Activated B cell treated with CpG ODN at 0.5 μM for 24 hours (primary cell): ENCODE measurements at regions of chr2 and their contacts with region 1.

Region 1: DNA sequence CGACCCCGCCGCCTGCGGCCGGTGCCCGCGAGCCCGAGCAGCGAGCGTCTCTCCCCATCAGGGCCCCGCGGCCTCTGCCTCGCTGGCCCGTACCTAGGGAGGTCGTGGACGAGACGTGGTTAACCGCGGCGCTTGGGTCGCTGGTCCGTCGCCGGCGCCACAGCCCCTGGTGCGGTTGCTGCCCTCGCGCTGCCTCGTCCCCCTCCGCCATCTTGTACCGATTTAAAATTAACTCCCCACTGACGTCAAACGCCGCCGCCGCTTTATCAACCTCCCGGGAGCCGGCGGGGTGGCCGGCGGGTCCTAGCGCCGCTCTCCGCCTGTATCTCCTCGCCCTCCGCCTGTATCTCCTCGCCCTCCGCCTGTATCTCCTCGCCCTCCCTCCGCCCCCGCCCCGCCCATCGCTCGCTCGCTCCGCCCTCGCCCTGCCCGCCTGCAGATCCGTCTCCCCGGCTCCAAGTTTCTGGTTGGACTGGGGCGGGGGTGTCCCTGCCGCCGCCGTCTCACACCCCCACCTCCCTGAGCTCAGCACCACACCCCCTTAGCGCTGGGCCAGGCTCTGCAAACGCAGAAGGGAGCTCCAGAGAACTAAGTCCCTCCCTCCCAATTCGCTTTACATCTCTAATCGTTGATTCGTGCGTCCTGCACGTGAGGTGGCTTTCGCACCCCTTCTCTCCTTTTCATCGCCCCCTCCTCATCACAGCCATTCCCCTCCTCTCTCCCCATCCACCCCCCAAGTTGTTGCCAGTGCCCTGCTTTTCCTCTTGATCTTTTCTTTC is at the start of gene ATL2:
- DNase-seq: peak; percentile 87
- ATAC-seq: peak; percentile 87
- H3K4me3 Mint-ChIP-seq: peak within 1 kb of the TSS; percentile 91
- H3K27ac Mint-ChIP-seq: peak within 1 kb of the TSS; percentile 86
- H3K4me1 Mint-ChIP-seq: peaks cover 43% of the 10 kb centered on the region
- H3K27me3 Mint-ChIP-seq: peaks cover 4% of the 10 kb centered on the region
- CTCF ChIP-seq: no peak
- total RNA-seq, gene ATL2: 40.0 and 43.2 TPM in 2 replicates

Region 2: DNA sequence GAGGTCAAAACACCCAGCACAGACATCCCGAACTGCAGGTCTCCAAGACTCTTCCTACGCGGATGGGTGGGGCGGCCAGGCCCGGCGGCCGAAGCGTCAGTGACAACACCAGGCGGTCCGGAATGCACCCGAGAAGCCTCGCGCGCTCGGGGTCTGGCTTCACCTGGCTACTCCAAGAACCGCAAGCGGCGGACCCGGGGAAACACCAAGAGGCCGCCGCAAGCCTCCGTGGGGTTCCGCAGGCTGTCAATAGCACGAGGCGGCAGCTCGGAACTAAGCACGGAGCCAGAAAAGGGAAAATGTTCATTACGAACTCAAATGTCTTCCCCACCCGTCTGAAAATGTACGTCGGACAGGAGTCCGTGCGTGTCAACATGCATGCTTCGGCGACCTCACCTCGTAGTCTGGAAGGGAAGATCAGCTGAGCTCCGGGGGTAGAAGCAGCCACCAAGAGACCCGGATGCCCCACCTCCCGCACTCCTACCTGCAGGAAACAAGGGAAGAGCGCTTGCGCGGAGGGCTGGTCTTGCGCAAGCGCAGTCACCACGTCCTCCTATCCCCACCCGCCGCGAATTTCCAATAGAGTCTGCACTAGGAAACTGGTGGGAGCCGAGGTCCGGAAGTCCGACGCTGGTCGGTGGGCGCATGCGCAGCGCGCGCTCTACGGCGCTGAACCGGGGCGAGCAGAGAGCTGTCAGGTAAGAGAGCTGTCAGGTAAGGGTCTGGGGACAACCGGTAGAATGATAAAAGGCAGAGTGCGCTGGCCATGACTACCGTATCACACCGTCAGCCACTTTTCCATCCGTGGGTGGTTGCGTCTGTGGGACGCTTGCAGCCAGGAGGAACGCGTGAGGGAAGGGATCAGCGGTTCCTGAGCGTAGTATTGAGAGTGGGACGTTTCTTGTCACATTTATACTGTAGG is 1293.1 kb before region 1 on chr2 and contains the starts of genes GPATCH11 and HEATR5B:
- CTCF ChIA-PET with region 1: no interaction called
- POLR2A ChIA-PET with region 1: no interaction called
- intact Hi-C with region 1: loop called (anchors 10 kb)
- DNase-seq: peak; percentile 83
- ATAC-seq: peak; percentile 83
- H3K4me3 Mint-ChIP-seq: no peak within 1 kb of the TSS
- H3K27ac Mint-ChIP-seq: no peak within 1 kb of the TSS
- H3K4me1 Mint-ChIP-seq: peaks cover 23% of the 10 kb centered on the region
- H3K27me3 Mint-ChIP-seq: no peaks in the 10 kb centered on the region
- CTCF ChIP-seq: no peak
- total RNA-seq, gene GPATCH11: 30.7 and 32.9 TPM in 2 replicates
- total RNA-seq, gene HEATR5B: 42.6 and 50.3 TPM in 2 replicates

Region 3: DNA sequence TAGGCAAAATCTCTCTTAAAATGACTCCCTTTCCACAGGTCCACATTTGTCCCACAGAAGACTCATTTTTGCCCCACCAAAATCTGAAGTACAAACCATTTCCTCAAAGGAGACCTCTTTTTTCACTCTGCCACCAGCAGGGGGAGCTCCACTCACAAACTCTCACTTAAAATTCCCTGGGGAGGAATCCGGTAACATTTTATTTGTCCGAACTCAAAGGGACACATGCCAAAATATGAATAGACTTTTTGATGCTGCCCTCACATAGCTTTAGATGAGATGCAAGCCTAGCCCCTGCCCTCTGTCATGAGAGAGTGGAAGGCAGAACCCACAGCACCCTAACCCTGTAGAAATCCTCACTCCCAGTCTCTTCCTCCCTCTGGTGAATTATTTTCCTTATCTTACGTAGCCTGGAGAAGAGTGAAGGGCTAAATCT is 395.1 kb before region 1 on chr2:
- CTCF ChIA-PET with region 1: no interaction called
- POLR2A ChIA-PET with region 1: no interaction called
- intact Hi-C with region 1: loop called (anchors 2 kb)
- DNase-seq: peak; percentile 47
- ATAC-seq: peak; percentile 47
- H3K4me3 Mint-ChIP-seq: peak overlapping the region; percentile 9
- H3K27ac Mint-ChIP-seq: no peak overlapping the region
- H3K4me1 Mint-ChIP-seq: peaks cover 7% of the 10 kb centered on the region
- H3K27me3 Mint-ChIP-seq: no peaks in the 10 kb centered on the region
- CTCF ChIP-seq: peak; percentile 18

Region 4: GRCh38 chr2:38353402-38353801 is 23.8 kb before region 1 on chr2:
- CTCF ChIA-PET with region 1: no interaction called
- POLR2A ChIA-PET with region 1: no interaction called
- intact Hi-C with region 1: no loop called
- DNase-seq: no peak
- ATAC-seq: no peak
- H3K4me3 Mint-ChIP-seq: no peak overlapping the region
- H3K27ac Mint-ChIP-seq: no peak overlapping the region
- H3K4me1 Mint-ChIP-seq: peaks cover 12% of the 10 kb centered on the region
- H3K27me3 Mint-ChIP-seq: no peaks in the 10 kb centered on the region
- CTCF ChIP-seq: no peak

Region 5: GRCh38 chr2:38508311-38509039 is 131.2 kb after region 1 on chr2:
- CTCF ChIA-PET with region 1: interaction called, 20 read pairs
- POLR2A ChIA-PET with region 1: interaction called, 6 read pairs
- intact Hi-C with region 1: loop called (anchors 1 kb)
- DNase-seq: peak; percentile 46
- ATAC-seq: peak; percentile 79
- H3K4me3 Mint-ChIP-seq: no peak overlapping the region
- H3K27ac Mint-ChIP-seq: no peak overlapping the region
- H3K4me1 Mint-ChIP-seq: peaks cover 4% of the 10 kb centered on the region
- H3K27me3 Mint-ChIP-seq: no peaks in the 10 kb centered on the region
- CTCF ChIP-seq: no peak

Region 6: DNA sequence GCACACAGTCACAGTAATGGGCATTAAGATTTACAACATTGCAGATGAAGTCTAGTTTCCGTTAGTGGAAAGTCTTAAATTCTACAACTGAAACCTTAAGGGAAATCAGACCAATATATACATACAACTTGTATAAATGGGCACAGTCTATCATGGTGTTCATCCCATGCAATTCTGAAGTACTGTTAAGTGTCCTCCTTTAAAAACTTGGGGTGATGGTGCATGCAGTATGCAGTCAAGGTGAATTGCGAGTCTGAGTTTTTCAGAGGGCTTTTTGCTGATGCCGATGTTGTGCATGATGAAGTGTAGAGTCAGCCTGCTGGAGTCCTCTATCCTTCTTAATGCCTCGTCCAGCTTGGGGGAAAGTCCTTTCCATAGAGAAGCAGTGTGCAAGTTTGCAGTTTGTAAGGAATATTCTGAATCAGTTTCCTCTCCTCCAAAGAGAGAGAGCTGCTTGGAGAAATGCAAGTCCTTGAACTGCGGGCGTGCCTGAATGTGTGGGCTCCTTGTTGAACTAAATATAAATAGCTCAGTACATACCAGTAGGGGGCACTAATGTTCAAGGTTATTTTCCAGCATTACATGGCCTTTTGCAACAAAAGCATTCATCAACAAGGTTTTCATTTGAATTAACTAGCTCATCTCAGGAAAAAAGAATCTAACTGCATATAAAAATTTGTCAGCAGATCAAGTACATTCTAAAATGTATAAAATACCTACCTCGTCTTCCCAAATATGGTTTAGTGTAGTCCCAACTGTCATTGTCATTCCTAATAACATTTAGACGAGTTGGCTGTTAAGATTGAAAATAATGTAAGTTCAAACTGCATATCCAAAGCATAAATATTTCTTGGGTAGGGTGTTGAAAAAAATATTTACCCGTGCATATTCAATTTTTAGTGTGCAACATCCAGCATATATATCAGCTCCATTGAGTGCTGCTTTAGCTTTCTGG is 204.2 kb after region 1 on chr2:
- CTCF ChIA-PET with region 1: no interaction called
- POLR2A ChIA-PET with region 1: no interaction called
- intact Hi-C with region 1: no loop called
- DNase-seq: no peak
- ATAC-seq: peak; percentile 71
- H3K4me3 Mint-ChIP-seq: no peak overlapping the region
- H3K27ac Mint-ChIP-seq: no peak overlapping the region
- H3K4me1 Mint-ChIP-seq: no peaks in the 10 kb centered on the region
- H3K27me3 Mint-ChIP-seq: peaks cover 15% of the 10 kb centered on the region
- CTCF ChIP-seq: no peak

Region 7: GRCh38 chr2:38592951-38593350 is 215.7 kb after region 1 on chr2:
- CTCF ChIA-PET with region 1: no interaction called
- POLR2A ChIA-PET with region 1: no interaction called
- intact Hi-C with region 1: no loop called
- DNase-seq: no peak
- ATAC-seq: no peak
- H3K4me3 Mint-ChIP-seq: no peak overlapping the region
- H3K27ac Mint-ChIP-seq: no peak overlapping the region
- H3K4me1 Mint-ChIP-seq: no peaks in the 10 kb centered on the region
- H3K27me3 Mint-ChIP-seq: peaks cover 28% of the 10 kb centered on the region
- CTCF ChIP-seq: no peak

Region 8: GRCh38 chr2:38750891-38751595 is 373.8 kb after region 1 on chr2 and contains the start of gene SRSF7:
- CTCF ChIA-PET with region 1: no interaction called
- POLR2A ChIA-PET with region 1: interaction called, 28 read pairs
- intact Hi-C with region 1: loop called (anchors 1 kb)
- DNase-seq: peak; percentile 98
- ATAC-seq: peak; percentile 75
- H3K4me3 Mint-ChIP-seq: peak within 1 kb of the TSS; percentile 98
- H3K27ac Mint-ChIP-seq: peak within 1 kb of the TSS; percentile 99
- H3K4me1 Mint-ChIP-seq: peaks cover 59% of the 10 kb centered on the region
- H3K27me3 Mint-ChIP-seq: no peaks in the 10 kb centered on the region
- CTCF ChIP-seq: no peak
- total RNA-seq, gene SRSF7: 247 and 254 TPM in 2 replicates

Region 9: DNA sequence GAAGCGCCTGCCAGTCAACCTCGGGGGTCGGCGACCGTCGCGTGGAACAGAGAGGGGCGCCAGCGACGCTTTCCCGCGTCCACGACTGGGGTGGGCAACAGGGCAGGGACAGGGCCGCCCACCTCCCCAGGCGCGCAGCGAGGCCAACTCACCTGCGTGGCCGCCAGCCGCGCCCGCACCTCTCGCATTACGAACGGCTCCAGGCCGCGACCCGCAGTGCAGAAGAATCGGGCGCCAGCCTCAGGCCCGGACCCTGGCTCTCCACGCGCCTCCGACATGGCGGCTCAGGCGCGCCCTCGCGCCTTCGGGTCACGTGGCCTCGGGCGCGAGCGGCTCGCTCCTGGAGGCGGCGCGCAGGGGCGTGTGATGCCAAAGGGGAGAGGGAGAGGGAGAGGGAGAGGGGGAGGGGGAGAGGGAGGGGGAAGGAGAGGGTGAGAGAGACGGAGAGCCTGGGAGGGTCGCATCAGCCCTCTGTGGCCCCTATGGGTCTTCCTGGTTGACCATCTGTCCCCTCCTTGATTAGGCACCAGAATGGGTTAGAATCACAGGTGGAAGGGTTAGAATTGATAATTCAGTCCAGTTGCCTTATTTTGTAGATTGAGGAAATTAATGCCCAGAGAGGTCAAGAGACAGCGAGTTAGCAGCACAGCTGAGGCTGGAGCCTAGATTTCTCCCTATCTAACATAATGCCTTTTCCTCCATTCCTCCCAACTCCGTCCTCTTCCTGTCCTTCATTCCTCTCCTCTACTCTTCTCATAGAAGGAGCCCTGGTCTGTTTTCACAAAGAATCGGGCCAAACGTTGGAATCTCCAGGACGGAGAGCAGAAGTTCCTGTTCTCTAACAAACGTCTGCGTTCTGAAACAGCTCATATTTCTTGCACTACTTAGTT is 1402.0 kb after region 1 on chr2 and contains the start of gene THUMPD2:
- CTCF ChIA-PET with region 1: no interaction called
- POLR2A ChIA-PET with region 1: no interaction called
- intact Hi-C with region 1: loop called (anchors 10 kb)
- DNase-seq: peak; percentile 64
- ATAC-seq: peak; percentile 82
- H3K4me3 Mint-ChIP-seq: peak within 1 kb of the TSS; percentile 89
- H3K27ac Mint-ChIP-seq: peak within 1 kb of the TSS; percentile 82
- H3K4me1 Mint-ChIP-seq: peaks cover 60% of the 10 kb centered on the region
- H3K27me3 Mint-ChIP-seq: no peaks in the 10 kb centered on the region
- CTCF ChIP-seq: no peak
- total RNA-seq, gene THUMPD2: 13.2 and 14.1 TPM in 2 replicates